K562 (cell line): ENCODE measurements at regions of chr3 and their contacts with region 1.

Region 1: DNA sequence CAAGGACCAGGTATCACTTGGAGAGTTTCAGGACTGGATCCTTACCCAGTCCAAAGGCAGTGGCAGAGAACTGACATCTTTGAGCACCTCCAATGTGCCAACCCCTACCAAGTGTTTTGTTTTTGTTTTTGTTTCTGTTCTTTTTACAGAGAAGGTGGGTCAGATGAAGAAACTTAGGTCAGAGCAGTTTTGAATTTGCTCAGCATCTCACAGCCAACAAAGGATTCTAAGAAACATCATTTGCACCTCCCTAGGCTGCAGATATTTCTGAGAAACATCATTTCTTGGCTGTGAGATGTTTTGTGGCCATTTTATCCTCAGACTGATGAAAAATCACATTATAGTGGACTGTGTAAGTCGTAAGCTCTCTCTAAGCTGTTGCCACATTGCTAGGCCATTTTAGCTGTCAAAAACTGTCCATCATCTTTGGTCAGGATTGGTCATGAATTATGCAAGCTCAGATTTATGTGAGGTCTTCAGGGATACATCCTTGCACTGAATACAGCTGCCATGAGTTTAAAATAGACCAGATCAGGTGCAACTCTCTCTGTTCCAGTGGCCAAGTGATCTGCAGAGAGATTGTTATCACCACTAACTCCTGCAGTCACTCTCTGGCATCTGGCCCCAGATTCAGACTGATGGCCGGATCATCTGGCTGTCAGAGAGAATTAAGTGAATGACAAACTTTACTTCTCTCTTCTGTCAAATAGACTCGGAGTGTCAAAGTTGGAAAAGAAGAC is 341.5 kb downstream of the EPHB1 start:
- DNase-seq: no peak
- ATAC-seq: no peak
- H3K4me3 ChIP-seq: no peak overlapping the region
- H3K27ac ChIP-seq: no peak overlapping the region
- H3K4me1 ChIP-seq: no peaks in the 10 kb centered on the region
- H3K27me3 ChIP-seq: peaks cover 0 to 8% of the 10 kb centered on the region in 2 experiments; a peak in 2 of 5 replicates
- CTCF ChIP-seq: no peak
- EP300 ChIP-seq: no peak
- POLR2A ChIP-seq: no peak
- RAD21 ChIP-seq: no peak

Region 2: GRCh38 chr3:136350132-136350531 is 1213.6 kb after region 1 on chr3:
- CTCF ChIA-PET with region 1: no interaction called
- POLR2A ChIA-PET with region 1: no interaction called
- in situ Hi-C with region 1: no loop called
- intact Hi-C with region 1: no loop called
- DNase-seq: no peak
- ATAC-seq: no peak
- H3K4me3 ChIP-seq: no peak overlapping the region
- H3K27ac ChIP-seq: no peak overlapping the region
- H3K4me1 ChIP-seq: no peaks in the 10 kb centered on the region
- H3K27me3 ChIP-seq: no peaks in the 10 kb centered on the region
- CTCF ChIP-seq: no peak
- EP300 ChIP-seq: no peak
- POLR2A ChIP-seq: no peak
- RAD21 ChIP-seq: no peak

Region 3: DNA sequence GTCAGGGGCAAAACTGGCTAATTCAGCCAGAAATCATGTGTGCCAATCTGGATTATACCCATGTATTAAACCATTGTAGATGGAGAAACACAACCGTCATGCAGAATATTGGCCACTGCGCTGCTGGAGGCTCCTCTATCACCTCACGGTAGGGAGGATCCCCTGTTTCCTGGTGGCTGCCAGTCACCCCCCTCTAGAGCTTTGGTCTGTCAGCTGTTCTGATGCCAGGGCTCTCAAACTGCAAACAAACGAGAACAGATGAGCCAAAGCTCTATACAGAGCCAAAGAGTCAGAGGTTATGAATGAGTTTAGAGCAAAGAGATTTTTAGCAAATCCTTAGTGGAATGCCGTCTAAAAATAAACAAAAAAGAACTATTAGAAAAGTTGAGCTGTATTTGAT is 1883.8 kb after region 1 on chr3:
- CTCF ChIA-PET with region 1: no interaction called
- POLR2A ChIA-PET with region 1: no interaction called
- in situ Hi-C with region 1: loop called (anchors 10 kb)
- intact Hi-C with region 1: no loop called
- DNase-seq: no peak
- ATAC-seq: no peak
- H3K4me3 ChIP-seq: no peak overlapping the region
- H3K27ac ChIP-seq: no peak overlapping the region
- H3K4me1 ChIP-seq: no peaks in the 10 kb centered on the region
- H3K27me3 ChIP-seq: peaks cover 0 to 6% of the 10 kb centered on the region in 2 experiments; a peak in 2 of 5 replicates
- CTCF ChIP-seq: no peak
- EP300 ChIP-seq: no peak
- POLR2A ChIP-seq: no peak
- RAD21 ChIP-seq: no peak